Vagina (tissue), 2 donors: ENCODE measurements at regions of chr6 and their contacts with region 1.

Region 1: DNA sequence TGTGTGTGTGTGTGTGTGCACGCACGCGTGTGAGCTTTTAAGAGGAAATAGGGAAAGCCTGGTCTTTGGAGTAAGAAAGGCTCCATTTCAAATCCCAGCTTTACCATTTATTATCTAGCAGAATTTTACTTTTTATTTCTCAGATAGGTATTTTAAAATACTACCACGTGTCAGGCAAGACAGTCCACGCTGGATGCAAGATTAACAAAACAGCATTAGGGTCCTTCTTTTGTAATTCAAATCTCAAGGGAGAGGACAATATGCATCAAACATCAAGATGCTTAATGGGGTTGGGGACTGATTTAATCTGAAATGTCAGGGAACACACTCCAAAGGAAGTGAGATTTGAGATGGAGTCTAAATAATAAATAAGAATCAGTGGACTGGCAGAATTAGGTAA is 768.8 kb downstream of the PHF3 start:
- DNase-seq: no peak
- H3K4me3 ChIP-seq: no peak overlapping the region
- H3K27ac ChIP-seq: no peak overlapping the region
- H3K4me1 ChIP-seq: no peaks in the 10 kb centered on the region
- H3K27me3 ChIP-seq: no peaks in the 10 kb centered on the region
- CTCF ChIP-seq: no peak
- POLR2A ChIP-seq: no peak

Region 2: DNA sequence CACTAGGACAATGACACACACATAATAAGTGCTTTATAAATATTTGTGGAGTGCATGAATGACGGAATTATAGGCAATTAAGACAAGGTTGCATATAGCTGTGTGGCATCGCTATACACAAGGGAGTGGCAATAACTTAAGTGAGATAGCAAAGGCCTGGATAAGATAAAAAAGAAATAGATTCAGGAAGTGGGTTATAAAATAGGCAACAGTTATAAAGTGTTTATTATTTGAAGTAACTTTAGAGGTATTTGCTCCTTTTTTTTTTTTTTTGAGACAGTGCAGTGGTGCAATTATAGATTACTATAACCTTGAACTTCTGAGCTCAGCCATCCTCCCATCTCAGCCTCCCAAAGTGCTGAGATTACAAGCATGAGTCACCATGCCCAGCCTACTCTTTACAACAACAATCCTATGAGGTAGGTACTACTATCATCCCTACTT is 908.0 kb before region 1 on chr6:
- intact Hi-C with region 1: loop called (anchors 5 kb)
- DNase-seq: no peak
- H3K4me3 ChIP-seq: no peak overlapping the region
- H3K27ac ChIP-seq: no peak overlapping the region
- H3K4me1 ChIP-seq: no peaks in the 10 kb centered on the region
- H3K27me3 ChIP-seq: no peaks in the 10 kb centered on the region
- CTCF ChIP-seq: no peak
- POLR2A ChIP-seq: no peak